Right cardiac atrium (tissue), 5 donors: ENCODE measurements at regions of chr10 and their contacts with region 1.

Region 1: GRCh38 chr10:6195846-6196245 is 6.9 kb upstream of the PFKFB3 start:
- DNase-seq: peak in 2 of 3 donors; percentile 52 to 74
- ATAC-seq: peak; percentile 66 to 67
- H3K4me3 ChIP-seq: no peak overlapping the region
- H3K27ac ChIP-seq: peak overlapping the region; percentile 77
- H3K4me1 ChIP-seq: peaks cover 7% of the 10 kb centered on the region
- H3K27me3 ChIP-seq: no peaks in the 10 kb centered on the region

Region 2: DNA sequence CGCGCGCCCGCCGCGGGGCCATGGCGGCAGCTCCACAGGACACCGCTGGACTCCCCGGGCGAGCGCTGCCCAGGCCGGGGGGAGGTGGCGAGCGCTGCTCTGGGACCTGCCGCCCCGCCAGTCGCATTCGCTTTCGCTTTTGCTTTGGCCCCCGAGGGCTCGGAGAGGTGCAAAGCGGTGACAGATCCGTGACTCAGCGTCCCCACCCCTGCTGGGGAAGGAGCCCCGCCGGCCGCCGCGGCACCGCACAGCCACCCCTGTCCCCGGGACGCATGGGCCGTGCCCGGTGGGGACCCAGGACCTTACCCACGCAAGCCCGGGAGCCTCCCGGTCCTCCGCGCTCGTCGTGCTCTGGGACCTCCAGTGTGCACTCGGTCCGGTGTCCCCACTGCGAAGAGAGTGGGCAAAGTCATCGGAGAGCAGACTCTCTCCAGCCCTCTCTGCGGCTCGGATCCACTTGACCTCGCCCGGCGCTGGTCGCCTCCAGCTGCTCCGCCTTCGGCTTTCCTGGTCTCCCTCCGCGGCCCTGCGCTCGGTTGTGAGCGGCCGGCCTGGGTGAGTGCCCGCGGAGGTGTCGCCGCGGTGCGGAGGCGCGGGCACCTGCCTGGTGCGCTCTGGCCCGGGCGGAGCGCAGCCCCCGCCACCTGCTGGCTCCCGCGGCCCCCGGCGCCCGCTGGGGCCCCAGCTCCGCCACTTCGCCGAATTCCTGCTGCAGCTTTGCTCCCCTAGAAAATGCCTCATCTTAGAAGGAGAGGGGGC is 218.2 kb before region 1 on chr10 and contains the start of gene IL15RA:
- intact Hi-C with region 1: no loop called
- DNase-seq: peak; percentile 81 to 92 (median 89)
- ATAC-seq: peak; percentile 82 to 86
- H3K4me3 ChIP-seq: peak within 1 kb of the TSS; percentile 62
- H3K27ac ChIP-seq: peak within 1 kb of the TSS; percentile 56
- H3K4me1 ChIP-seq: no peaks in the 10 kb centered on the region
- H3K27me3 ChIP-seq: no peaks in the 10 kb centered on the region
- total RNA-seq, gene IL15RA: 11.8 to 19.7 (median 15.8) TPM

Region 3: GRCh38 chr10:6151087-6151977 is 44.5 kb before region 1 on chr10:
- intact Hi-C with region 1: loop called in 1 of 4 experiments (anchors 5 kb)
- DNase-seq: peak; percentile 62 to 78 (median 78)
- ATAC-seq: peak; percentile 77 to 87
- H3K4me3 ChIP-seq: no peak overlapping the region
- H3K27ac ChIP-seq: peak overlapping the region; percentile 26
- H3K4me1 ChIP-seq: no peaks in the 10 kb centered on the region
- H3K27me3 ChIP-seq: no peaks in the 10 kb centered on the region